ENCODE measurements at regions of chr10 and their contacts with region 1.

Region 1: DNA sequence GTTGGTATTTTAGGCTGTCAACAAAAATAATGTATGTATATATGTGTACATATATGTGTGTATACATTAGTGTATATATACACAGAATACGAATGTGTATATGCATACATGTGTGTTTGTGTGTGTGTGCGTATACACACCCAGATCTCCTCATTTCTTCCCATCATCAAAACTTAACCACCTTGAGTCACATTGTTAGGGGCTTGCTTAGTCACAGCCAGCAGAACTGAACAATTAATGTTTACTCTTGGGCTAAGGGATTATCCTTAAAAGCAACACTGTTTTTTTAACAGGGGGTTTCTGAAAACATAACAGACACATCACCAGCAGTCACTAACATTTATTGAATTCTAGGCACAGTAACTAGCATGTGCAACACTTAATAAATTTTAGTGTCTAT is 83.0 kb upstream of the ASAH2 start:
- DNase-seq: no peak
- H3K4me3 ChIP-seq: no peak overlapping the region
- H3K27ac ChIP-seq: no peak overlapping the region
- H3K4me1 ChIP-seq: peaks cover 0 to 8% (median 0%) of the 10 kb centered on the region in 4 donors
- H3K27me3 ChIP-seq: no peaks in the 10 kb centered on the region
- CTCF ChIP-seq: no peak
- EP300 ChIP-seq: no peak
- POLR2A ChIP-seq: no peak

Region 2: DNA sequence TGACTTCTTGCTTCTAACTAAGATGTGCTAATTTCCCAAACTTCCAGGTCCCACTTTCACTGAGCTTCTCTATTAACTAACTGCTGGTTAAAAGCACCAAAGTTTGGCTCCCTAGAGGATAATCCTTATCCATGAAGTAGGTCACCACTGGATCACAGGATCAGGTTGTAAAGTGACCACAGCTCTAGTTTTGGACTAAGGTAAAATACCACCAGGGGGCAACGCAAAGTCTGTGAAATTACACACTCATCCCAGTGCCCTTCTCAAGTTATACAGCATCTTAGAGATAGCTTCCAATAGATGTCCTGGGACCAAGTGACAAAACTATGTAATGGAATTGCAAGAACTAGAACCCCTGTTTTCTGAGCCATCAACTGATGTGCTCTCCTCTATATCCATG is 33.5 kb after region 1 on chr10:
- intact Hi-C with region 1: loop called (anchors 5 kb)
- DNase-seq: no peak
- H3K4me3 ChIP-seq: no peak overlapping the region
- H3K27ac ChIP-seq: no peak overlapping the region
- H3K4me1 ChIP-seq: peaks cover 0 to under 1% (median 0%) of the 10 kb centered on the region in 4 donors
- H3K27me3 ChIP-seq: no peaks in the 10 kb centered on the region
- CTCF ChIP-seq: peak; percentile 20 to 33 (median 32)
- EP300 ChIP-seq: no peak
- POLR2A ChIP-seq: no peak

Measured in esophagus muscularis mucosa (tissue), 4 donors.